AG04449 (cell line): ENCODE measurements at regions of chr12 and their contacts with region 1.

Region 1: GRCh38 chr12:62793256-62794217 is 141.4 kb downstream of the PPM1H start:
- DNase-seq: peak; percentile 79
- H3K4me3 ChIP-seq: no peak overlapping the region
- CTCF ChIP-seq: peak; percentile 56

Region 2: GRCh38 chr12:62435303-62436163 is 358.0 kb before region 1 on chr12:
- CTCF ChIA-PET with region 1: interaction called, 229 read pairs
- POLR2A ChIA-PET with region 1: no interaction called
- DNase-seq: no peak
- H3K4me3 ChIP-seq: peak overlapping the region; percentile 62
- CTCF ChIP-seq: peak; percentile 74

Region 3: DNA sequence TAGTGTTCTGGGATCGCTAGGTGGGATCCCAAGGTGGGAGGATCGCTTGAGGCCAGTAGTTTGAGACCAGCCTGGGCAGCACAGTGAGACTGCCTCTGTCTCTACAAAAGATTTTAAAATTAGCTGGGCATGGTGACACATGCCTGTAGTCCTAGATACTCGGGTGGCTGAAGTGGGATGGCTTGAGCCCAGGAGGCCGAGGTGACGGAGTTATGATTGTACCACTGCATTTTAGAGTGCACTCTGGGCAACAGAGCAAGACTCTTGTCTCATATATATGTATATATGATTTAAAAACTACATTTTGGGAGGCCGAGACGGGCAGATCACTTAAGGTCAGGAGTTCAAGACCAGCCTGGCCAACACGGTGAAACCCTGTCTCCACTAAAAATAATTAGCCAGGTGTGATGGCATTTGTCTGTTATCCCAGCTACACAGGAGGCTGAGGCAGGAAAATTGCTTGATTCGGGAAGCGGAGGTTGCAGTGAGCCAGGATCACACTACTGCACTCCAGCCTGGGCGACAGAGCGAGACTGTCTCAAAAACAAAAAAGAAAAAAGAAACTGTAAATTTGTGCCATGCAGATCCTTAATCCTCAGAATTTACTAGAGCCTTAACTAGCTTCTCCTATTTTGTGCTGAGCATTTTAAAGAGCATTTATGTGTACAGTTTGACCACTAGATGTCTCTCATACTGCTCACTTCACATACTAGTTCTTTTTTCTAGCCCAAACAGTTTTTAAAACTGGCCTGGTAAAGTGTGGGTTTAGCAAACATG is 212.1 kb before region 1 on chr12:
- CTCF ChIA-PET with region 1: interaction called, 347 read pairs
- POLR2A ChIA-PET with region 1: no interaction called
- DNase-seq: no peak
- H3K4me3 ChIP-seq: no peak overlapping the region
- CTCF ChIP-seq: peak; percentile 51

Region 4: GRCh38 chr12:62603061-62603810 is 190.3 kb before region 1 on chr12:
- CTCF ChIA-PET with region 1: interaction called, 118 read pairs
- POLR2A ChIA-PET with region 1: interaction called, 17 read pairs
- DNase-seq: no peak
- H3K4me3 ChIP-seq: peak overlapping the region; percentile 90
- CTCF ChIP-seq: peak; percentile 73

Region 5: GRCh38 chr12:62692884-62693283 is 100.7 kb before region 1 on chr12:
- CTCF ChIA-PET with region 1: interaction called, 12 read pairs
- POLR2A ChIA-PET with region 1: no interaction called
- DNase-seq: peak; percentile 78
- H3K4me3 ChIP-seq: no peak overlapping the region
- CTCF ChIP-seq: no peak

Region 6: DNA sequence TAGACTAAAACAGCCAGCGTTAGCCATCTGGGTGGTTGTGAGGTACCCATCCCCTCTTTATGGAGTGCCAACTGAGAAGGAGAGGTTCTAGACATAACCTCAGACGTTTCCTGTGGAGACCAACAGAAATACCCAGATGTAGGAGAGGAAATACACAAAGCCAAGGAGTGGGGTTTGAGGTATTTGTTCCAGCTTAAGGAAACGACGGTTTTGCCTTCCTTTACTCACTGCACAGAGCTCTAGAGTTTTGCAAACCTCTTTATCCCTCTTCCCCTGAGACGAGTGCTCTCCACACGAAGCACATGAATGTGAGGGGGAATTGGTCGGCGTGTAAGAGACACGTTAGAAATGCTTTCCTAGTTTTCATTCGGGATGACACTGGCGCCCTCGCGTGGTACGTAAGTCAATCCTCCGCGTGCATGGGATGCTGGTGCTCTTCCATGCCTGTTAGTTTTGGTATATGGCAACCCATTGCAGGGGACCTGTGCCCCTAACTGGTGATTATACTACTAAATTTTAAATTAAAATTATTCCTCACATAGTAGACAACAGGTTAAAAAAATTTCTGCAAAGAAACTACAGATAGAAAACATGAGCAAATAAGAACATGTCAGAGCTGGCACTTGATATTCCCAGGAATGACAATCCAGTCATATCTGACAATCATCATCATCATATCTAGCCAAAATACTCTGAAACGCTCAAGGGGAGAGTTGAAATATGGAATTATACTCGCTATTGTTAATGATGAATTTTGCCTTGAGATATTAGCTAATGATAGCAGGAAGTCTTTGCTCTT is 19.7 kb after region 1 on chr12:
- CTCF ChIA-PET with region 1: interaction called, 48 read pairs
- POLR2A ChIA-PET with region 1: no interaction called
- DNase-seq: no peak
- H3K4me3 ChIP-seq: peak overlapping the region; percentile 21; the same call in 1 of the 2 replicates
- CTCF ChIP-seq: peak; percentile 76